Adrenal gland (tissue), 19 donors: ENCODE measurements at regions of chr4 and their contacts with region 1.

Region 1: DNA sequence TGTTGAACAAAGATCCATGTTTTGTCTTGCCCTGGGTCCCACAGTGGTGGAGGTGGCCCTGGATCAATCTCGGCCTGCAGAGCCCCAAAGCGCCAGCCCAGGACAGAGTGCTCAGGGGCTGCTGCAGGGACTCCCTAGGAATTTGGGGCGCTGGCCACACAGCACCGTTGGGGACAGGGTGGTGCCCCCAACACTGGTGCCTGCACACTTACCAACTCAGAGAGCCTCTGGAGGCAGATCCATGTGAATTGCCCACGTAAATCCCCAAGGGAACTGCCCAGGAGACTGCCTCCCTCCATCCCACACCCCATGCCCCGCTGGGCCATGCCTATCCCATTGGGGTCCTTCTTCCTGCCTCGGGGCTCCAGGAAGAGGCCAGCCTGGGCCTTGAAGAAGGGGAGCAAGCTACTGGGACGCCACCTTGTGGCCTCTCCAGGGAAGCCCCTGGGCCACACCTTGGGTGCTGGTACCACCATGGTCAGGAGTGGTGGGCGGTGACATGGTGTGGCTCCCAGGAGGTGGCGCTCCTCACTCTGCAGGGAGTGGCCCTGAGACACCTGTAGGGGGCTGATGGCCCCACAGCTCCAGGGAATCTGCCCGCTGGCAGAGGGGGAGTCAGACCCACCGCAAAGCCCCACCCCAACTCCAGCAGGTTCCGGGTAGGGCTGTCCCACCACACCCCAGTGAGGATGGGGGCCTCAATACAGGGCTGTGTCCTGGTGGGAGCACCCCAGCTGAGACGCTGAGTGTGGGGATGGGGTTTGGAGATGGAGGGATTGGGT is 22.8 kb downstream of the CFAP99 start:
- DNase-seq: peak; percentile 40 to 78 (median 65)
- H3K4me3 ChIP-seq: no peak overlapping the region
- H3K27ac ChIP-seq: no peak overlapping the region
- H3K4me1 ChIP-seq: no peaks in the 10 kb centered on the region
- H3K27me3 ChIP-seq: no peaks in the 10 kb centered on the region
- CTCF ChIP-seq: peak; percentile 48 to 76 (median 68)
- POLR2A ChIP-seq: no peak

Region 2: DNA sequence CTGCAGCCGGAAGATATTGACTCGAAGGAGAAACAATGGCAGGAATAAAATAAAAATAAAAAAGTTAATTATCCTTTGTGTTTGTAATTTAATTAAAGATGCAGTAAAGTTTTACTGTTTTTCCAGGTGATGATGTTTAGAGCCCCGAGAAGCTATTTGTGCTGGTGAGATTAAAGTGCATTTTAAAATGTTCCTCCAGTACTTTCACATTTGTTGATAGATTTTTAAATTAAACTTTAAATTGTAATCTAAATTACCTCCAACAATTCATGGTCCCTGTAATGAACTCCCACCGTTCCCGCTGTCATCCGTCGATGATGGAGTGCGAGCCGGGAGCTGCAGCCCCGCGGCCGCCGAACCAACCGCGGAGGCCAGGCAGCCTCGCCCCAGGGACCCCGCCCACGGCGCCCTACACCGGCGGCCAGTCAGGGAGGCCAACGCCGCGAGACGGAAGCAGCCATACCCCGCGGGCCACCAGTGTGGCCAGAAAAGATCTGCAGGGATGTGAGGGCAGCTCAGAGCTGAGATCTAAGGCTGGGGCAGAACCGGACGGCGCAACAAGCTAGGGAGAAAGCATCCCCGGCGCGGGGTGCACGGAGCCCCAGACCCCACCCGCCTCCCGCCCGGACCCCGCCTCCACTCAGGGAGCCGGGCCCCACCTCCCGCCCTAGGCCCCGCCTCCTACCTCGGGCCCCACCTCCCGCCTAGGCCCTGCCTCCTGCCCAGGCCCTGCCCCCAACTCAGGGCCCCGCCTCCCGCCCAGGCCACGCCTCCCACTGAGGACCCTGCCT is 861.5 kb before region 1 on chr4:
- intact Hi-C with region 1: no loop called
- DNase-seq: peak in 6 of 7 donors; percentile 94 to 98 (median 96)
- H3K4me3 ChIP-seq: peak overlapping the region in 2 of 4 donors; percentile 30 to 92
- H3K27ac ChIP-seq: peak overlapping the region; percentile 9 to 92 (median 68)
- H3K4me1 ChIP-seq: peaks cover 0 to 7% of the 10 kb centered on the region in 2 donors
- H3K27me3 ChIP-seq: no peaks in the 10 kb centered on the region
- CTCF ChIP-seq: peak in 1 of 6 experiments; percentile 3
- POLR2A ChIP-seq: peak in 1 of 2 donors; percentile 46

Region 3: DNA sequence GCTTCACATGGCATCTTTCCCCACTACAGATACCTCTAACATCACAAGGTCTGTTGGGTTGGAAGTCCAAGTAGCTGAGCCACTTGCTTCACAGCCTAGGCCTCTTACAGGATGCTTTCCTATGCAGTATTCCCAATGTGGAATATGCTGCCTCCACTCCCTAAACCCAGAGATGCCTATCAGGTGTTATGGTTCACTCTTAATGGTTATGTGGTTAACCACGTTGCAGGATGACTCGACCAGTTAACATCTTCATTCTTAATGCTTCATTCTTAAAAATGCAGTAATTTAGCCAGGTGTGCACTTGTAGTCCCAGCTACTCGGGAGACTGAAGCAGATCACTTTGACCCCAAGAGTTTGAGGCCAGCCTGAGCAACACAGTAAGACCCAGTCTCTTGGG is 223.9 kb before region 1 on chr4:
- intact Hi-C with region 1: loop called (anchors 5 kb)
- DNase-seq: no peak
- H3K4me3 ChIP-seq: no peak overlapping the region
- H3K27ac ChIP-seq: no peak overlapping the region
- H3K4me1 ChIP-seq: no peaks in the 10 kb centered on the region
- H3K27me3 ChIP-seq: no peaks in the 10 kb centered on the region
- CTCF ChIP-seq: no peak
- POLR2A ChIP-seq: no peak

Region 4: GRCh38 chr4:2402029-2402428 is 39.6 kb before region 1 on chr4:
- intact Hi-C with region 1: no loop called
- DNase-seq: peak; percentile 86 to 96 (median 93)
- H3K4me3 ChIP-seq: peak overlapping the region in 2 of 4 donors; percentile 27 to 39
- H3K27ac ChIP-seq: peak overlapping the region in 2 of 5 donors; percentile 51 to 73
- H3K4me1 ChIP-seq: peaks cover 14 to 17% of the 10 kb centered on the region in 2 donors
- H3K27me3 ChIP-seq: no peaks in the 10 kb centered on the region
- CTCF ChIP-seq: no peak
- POLR2A ChIP-seq: no peak